ENCODE measurements at regions of chr2 and their contacts with region 1.

Region 1: DNA sequence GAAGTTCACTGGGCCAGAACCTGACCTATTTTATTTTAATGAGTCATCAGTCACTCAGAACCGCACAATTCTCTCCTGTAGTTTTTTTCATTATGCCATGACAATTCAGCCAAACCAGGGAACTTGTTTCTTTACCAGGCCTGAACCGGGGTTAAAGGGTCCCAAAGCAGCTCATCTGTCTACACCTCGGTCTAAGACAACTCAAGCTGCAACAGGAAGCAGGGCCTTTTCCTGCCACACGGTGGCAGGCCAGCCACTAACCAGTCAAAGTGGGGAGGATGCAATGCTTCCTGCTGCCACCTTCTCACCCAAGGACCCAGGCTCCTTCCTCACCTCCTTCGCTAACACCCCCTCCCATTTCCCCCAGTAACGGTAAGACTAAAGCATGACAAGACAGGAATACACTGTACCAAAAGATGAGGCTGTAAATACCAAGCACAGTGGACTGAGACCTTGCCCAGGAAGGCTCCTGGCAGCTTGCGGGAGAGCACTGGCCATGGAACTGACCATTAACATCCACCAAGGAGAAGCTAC is 56.7 kb upstream of the ACKR3 start:
- DNase-seq: peak; percentile 84
- ATAC-seq: peak; percentile 99
- H3K4me3 Mint-ChIP-seq: no peak overlapping the region
- H3K27ac Mint-ChIP-seq: no peak overlapping the region
- H3K4me1 Mint-ChIP-seq: no peaks in the 10 kb centered on the region
- H3K27me3 Mint-ChIP-seq: peaks cover 26% of the 10 kb centered on the region

Region 2: GRCh38 chr2:236485519-236485918 is 27.4 kb before region 1 on chr2:
- CTCF ChIA-PET with region 1: no interaction called
- DNase-seq: no peak
- ATAC-seq: no peak
- H3K4me3 Mint-ChIP-seq: no peak overlapping the region
- H3K27ac Mint-ChIP-seq: no peak overlapping the region
- H3K4me1 Mint-ChIP-seq: no peaks in the 10 kb centered on the region
- H3K27me3 Mint-ChIP-seq: peaks cover 19% of the 10 kb centered on the region

Region 3: GRCh38 chr2:236526455-236527158 is 13.6 kb after region 1 on chr2:
- CTCF ChIA-PET with region 1: interaction called, 22 read pairs
- DNase-seq: no peak
- ATAC-seq: no peak
- H3K4me3 Mint-ChIP-seq: no peak overlapping the region
- H3K27ac Mint-ChIP-seq: no peak overlapping the region
- H3K4me1 Mint-ChIP-seq: no peaks in the 10 kb centered on the region
- H3K27me3 Mint-ChIP-seq: peaks cover 24% of the 10 kb centered on the region

Region 4: GRCh38 chr2:236536727-236537398 is 23.9 kb after region 1 on chr2:
- CTCF ChIA-PET with region 1: interaction called, 32 read pairs
- DNase-seq: peak; percentile 84
- ATAC-seq: peak; percentile 90
- H3K4me3 Mint-ChIP-seq: peak overlapping the region; percentile 89
- H3K27ac Mint-ChIP-seq: peak overlapping the region; percentile 92
- H3K4me1 Mint-ChIP-seq: peaks cover 55% of the 10 kb centered on the region
- H3K27me3 Mint-ChIP-seq: no peaks in the 10 kb centered on the region

Region 5: DNA sequence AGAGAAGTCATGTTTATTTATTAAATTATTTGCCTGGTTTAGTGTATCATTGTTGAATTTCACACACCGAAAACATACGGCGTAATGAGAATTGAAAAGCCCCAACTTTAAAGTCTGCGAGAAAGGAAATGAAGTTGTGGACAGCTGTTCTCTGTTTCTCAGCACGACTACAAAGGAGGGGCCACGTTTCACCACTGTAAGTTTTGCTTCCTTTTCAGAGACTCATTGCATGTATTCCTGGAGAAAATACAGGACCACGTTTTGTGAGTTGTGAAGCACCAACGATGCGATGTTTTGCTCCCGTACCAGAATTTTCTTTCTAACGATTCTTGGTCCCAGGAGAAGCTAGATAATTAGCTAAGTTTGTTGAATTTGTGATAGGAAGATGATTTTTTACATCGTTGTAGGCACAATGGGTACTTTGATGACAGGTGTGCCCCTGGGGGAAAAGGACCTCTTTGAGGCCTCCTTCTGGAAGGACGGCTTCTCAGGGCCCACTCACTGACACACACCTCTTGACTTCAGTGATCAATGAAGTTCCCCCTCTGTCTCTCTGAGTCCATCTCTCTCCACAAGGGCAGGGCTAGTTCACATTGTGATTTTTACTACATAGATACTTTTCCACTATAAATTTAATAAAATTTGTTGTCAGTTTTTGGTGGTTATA is 33.0 kb after region 1 on chr2:
- CTCF ChIA-PET with region 1: interaction called, 28 read pairs
- DNase-seq: peak; percentile 71
- ATAC-seq: peak; percentile 61
- H3K4me3 Mint-ChIP-seq: peak overlapping the region; percentile 59
- H3K27ac Mint-ChIP-seq: peak overlapping the region; percentile 95
- H3K4me1 Mint-ChIP-seq: peaks cover 81% of the 10 kb centered on the region
- H3K27me3 Mint-ChIP-seq: no peaks in the 10 kb centered on the region

Region 6: DNA sequence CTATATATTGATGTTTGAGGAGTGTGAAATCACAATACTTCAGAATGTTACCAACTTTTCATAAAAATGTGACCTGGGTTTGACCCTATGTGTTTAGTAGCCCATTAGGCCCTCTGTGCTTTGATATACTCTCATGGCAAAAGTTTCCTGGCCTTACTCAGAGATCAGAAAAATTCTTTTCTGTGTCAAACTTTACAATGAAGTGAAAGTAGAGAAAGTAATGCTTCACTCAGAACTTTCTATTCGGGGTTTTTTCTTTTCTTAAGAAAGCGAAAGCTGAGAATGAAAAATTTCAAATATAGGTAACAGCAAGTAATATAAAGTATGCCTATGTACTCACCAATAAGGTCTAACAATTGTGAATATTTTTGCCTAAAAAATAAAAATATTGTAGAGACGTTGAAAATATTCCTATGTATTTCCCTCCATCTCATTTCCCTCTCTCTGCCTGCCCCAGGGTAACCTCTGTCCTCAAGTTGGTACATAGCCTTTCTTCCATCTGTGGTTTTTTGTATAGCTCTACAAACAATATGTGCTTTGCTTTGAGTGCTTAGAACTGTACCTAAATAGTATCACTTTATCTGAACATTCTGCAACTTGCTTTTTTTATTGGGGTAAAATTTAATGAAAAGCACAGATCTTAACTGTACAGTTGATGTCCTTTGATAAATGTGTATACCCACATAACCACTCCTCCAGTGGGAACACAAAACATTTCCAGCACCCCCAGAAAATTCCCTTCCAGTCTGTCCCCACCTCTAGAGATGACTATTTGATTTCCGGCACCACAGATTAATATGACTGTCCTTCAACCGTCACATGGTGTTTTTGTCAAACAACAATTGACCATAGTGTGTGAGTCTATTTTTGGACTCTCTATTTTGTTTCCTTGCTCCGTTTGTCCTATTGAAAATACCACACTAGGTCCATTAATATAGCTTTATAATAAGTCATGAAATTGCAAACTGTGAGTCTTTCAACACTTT is 46.3 kb after region 1 on chr2:
- CTCF ChIA-PET with region 1: interaction called, 20 read pairs
- DNase-seq: no peak
- ATAC-seq: no peak
- H3K4me3 Mint-ChIP-seq: no peak overlapping the region
- H3K27ac Mint-ChIP-seq: no peak overlapping the region
- H3K4me1 Mint-ChIP-seq: peaks cover 22% of the 10 kb centered on the region
- H3K27me3 Mint-ChIP-seq: no peaks in the 10 kb centered on the region